ENCODE measurements at regions of chr2 and their contacts with region 1.

Region 1: GRCh38 chr2:195656859-195657633 is at the start of gene SLC39A10:
- DNase-seq: peak; percentile 85 to 95 (median 88)
- ATAC-seq: peak; percentile 80
- H3K4me3 ChIP-seq: peak within 1 kb of the TSS; percentile 86
- H3K27ac ChIP-seq: peak within 1 kb of the TSS; percentile 96
- H3K4me1 ChIP-seq: peaks cover 9 to 11% of the 10 kb centered on the region in 2 experiments
- H3K27me3 ChIP-seq: no peaks in the 10 kb centered on the region
- CTCF ChIP-seq: peak in 2 of 3 experiments; percentile 11 to 29; a peak in 2 of 6 replicates
- EP300 ChIP-seq: no peak
- POLR2A ChIP-seq: peak; percentile 91
- RAD21 ChIP-seq: no peak; a peak in 2 of 4 replicates
- polyA plus RNA-seq, gene SLC39A10: 14.5 to 18.2 TPM

Region 2: DNA sequence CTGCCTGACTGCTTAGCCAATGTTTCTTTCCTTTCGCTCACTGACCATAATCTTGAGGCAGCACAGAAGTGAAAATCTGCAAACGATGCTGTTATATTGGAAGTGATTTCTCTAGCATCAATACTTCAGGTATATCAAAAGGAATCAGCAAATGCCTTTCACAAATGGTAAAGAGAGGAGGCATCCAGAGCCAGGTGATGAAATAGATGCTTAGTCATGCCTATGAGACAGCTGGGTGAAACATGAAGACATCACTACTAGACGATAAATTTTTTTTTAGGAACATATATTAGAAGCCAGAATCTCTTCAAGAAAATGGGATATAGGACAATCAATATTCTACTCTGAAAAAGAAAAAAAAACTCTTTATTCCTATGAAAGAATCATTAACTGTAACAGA is 249.3 kb before region 1 on chr2:
- CTCF ChIA-PET with region 1: no interaction called
- POLR2A ChIA-PET with region 1: no interaction called
- in situ Hi-C with region 1: no loop called
- intact Hi-C with region 1: loop called (anchors 5 kb)
- DNase-seq: peak in 2 of 4 experiments; percentile 18 to 38
- ATAC-seq: peak; percentile 68
- H3K4me3 ChIP-seq: no peak overlapping the region
- H3K27ac ChIP-seq: peak overlapping the region; percentile 69; the same call in 1 of the 3 replicates
- H3K4me1 ChIP-seq: peaks cover 0 to 10% of the 10 kb centered on the region in 2 experiments; a peak in 2 of 5 replicates
- H3K27me3 ChIP-seq: no peaks in the 10 kb centered on the region
- CTCF ChIP-seq: no peak
- EP300 ChIP-seq: no peak
- POLR2A ChIP-seq: no peak
- RAD21 ChIP-seq: no peak

Region 3: GRCh38 chr2:195533771-195534642 is 123.0 kb before region 1 on chr2:
- CTCF ChIA-PET with region 1: no interaction called
- POLR2A ChIA-PET with region 1: interaction called, 3 read pairs
- in situ Hi-C with region 1: no loop called
- intact Hi-C with region 1: loop called (anchors 2 kb)
- DNase-seq: peak in 2 of 4 experiments; percentile 21 to 67
- ATAC-seq: peak; percentile 61
- H3K4me3 ChIP-seq: no peak overlapping the region
- H3K27ac ChIP-seq: peak overlapping the region; percentile 58; the same call in 2 of the 3 replicates
- H3K4me1 ChIP-seq: peaks cover 10 to 57% of the 10 kb centered on the region in 2 experiments
- H3K27me3 ChIP-seq: no peaks in the 10 kb centered on the region
- CTCF ChIP-seq: peak in 2 of 3 experiments; percentile 15 to 19; a peak in 1 of 6 replicates
- EP300 ChIP-seq: no peak
- POLR2A ChIP-seq: no peak
- RAD21 ChIP-seq: no peak

Region 4: GRCh38 chr2:195595825-195596224 is 61.2 kb before region 1 on chr2:
- CTCF ChIA-PET with region 1: no interaction called
- POLR2A ChIA-PET with region 1: interaction called, 3 read pairs
- in situ Hi-C with region 1: no loop called
- intact Hi-C with region 1: loop called (anchors 1 kb)
- DNase-seq: peak; percentile 51 to 92 (median 72)
- ATAC-seq: peak; percentile 90
- H3K4me3 ChIP-seq: peak overlapping the region; percentile 16; the same call in 1 of the 2 replicates
- H3K27ac ChIP-seq: peak overlapping the region; percentile 80
- H3K4me1 ChIP-seq: peaks cover 11 to 23% of the 10 kb centered on the region in 2 experiments; a peak in 4 of 5 replicates
- H3K27me3 ChIP-seq: no peaks in the 10 kb centered on the region
- CTCF ChIP-seq: no peak
- EP300 ChIP-seq: peak; percentile 85
- POLR2A ChIP-seq: no peak
- RAD21 ChIP-seq: 0 out of 4 replicates have a peak, but pooled peaks of 1 of the 2 experiments have one; percentile 1

Region 5: DNA sequence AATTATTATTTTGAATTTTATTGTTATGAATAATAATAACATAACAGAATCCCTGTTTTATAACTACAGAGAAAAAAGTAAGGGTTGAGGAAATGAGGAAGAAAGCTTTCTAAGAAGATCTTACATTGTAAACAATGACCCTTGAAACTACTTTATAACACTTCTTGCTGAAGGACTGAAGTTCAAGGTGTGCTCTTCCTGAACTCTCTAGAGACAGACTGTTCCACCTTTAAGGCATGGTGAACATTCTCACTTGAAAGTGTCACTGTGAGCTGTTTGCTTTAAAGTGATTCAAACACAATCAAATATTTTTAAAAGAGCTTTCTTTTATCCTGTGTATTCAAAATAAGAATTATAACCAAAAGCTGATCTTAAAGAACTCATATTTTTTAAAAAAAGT is 280.1 kb after region 1 on chr2:
- CTCF ChIA-PET with region 1: no interaction called
- POLR2A ChIA-PET with region 1: no interaction called
- in situ Hi-C with region 1: no loop called
- intact Hi-C with region 1: loop called (anchors 5 kb)
- DNase-seq: no peak
- ATAC-seq: no peak
- H3K4me3 ChIP-seq: no peak overlapping the region
- H3K27ac ChIP-seq: no peak overlapping the region
- H3K4me1 ChIP-seq: no peaks in the 10 kb centered on the region
- H3K27me3 ChIP-seq: no peaks in the 10 kb centered on the region
- CTCF ChIP-seq: no peak
- EP300 ChIP-seq: no peak
- POLR2A ChIP-seq: no peak
- RAD21 ChIP-seq: no peak

Measured in K562 (cell line).